GM23248 (cell line): ENCODE measurements at regions of chr12 and their contacts with region 1.

Region 1: DNA sequence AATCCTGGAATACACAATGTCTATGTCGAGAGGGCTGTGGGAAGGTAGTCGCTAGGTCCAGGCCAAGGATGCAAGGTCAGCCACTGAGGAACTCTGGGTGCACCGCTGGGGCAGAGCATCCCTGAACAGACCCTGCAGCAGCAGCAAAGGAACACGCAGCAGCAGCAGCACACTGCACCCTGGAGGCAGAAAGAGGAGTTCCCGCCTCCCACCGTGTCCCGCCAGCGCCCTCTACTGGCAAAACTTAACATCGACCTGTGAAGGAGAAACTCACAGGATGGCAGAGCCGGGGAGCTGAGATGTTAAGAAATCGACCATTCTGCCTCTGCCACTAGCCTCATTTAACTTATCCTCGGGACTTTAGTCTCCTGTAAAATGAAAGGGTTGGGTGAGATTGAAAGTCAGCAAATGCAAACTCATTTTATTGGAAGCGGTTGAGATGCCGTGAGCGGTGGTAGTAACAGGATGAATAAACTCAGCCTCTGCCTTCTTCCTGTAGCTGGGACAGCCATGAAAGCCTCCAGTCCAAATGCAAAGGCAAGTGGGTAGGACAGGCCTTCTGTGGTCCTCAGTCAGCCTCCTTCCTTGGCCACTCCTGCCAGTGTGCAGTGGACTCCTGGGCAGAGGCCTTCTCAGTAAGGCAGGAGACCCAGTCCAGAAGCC is 45.6 kb downstream of the STAB2 start:
- DNase-seq: peak; percentile 70
- H3K4me3 ChIP-seq: no peak overlapping the region
- H3K27ac ChIP-seq: no peak overlapping the region
- H3K4me1 ChIP-seq: no peaks in the 10 kb centered on the region
- H3K27me3 ChIP-seq: 0 out of 2 replicates have a peak, but pooled peaks cover 9% of the 10 kb centered on the region

Region 2: DNA sequence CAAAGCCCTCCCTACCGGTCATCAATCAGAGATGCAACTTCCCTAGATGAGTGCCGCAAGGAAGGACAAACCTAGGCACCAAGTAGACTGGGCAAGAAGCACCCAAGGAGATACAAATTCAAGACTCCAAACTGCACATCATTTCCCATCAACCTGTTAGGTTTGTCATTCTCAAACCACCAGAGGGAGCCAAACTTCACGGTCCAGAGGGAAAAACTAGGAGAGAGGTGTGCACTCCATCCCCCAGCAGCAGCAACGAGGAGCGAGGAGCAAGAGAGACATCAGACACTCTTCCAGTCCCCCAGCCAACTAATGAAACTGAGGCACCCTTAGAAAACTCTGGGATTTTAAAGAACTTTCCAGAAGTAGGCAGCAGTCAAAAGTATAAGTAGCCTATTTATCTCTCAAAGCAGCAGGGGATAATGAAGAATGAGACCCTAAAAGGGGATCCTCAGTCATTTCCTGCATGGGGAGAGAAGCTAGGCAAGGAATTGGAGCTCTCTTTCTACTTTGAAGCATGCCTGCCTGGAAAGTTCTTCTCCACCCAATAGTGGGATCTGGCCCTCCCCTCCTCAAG is 245.3 kb after region 1 on chr12:
- in situ Hi-C with region 1: loop called (anchors 10 kb)
- DNase-seq: peak; percentile 80
- H3K4me3 ChIP-seq: no peak overlapping the region
- H3K27ac ChIP-seq: no peak overlapping the region
- H3K4me1 ChIP-seq: no peaks in the 10 kb centered on the region
- H3K27me3 ChIP-seq: no peaks in the 10 kb centered on the region